Activated CD8-positive, alpha-beta T cell treated with anti-CD3 and anti-CD28 coated beads for 36 hours (primary cell): ENCODE measurements at regions of chr5 and their contacts with region 1.

Region 1: DNA sequence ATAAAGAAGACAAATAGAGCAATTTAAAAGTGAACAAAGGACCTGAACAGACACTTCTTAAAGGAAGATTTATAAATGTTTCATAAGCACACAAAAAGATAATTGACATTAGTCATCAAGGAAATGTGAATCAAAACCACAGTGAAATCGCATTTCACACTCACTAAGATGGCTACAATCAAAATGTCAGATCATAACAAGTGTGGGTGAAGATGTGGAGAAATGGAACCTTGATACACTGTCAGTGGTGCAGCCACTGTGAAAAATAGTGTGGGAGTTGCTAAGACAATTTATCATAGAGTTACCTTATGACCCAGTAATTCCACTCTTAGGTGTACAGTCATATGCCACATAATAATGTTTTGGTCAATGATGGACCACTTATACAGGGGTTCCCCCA is 54.5 kb upstream of the HTR4 start:
- DNase-seq: peak; percentile 69
- ATAC-seq: peak; percentile 97
- H3K4me3 Mint-ChIP-seq: no peak overlapping the region
- H3K27ac Mint-ChIP-seq: peak overlapping the region; percentile 55
- H3K4me1 Mint-ChIP-seq: peaks cover 35% of the 10 kb centered on the region
- H3K27me3 Mint-ChIP-seq: peaks cover 26% of the 10 kb centered on the region
- CTCF ChIP-seq: no peak

Region 2: GRCh38 chr5:148620696-148621095 is 88.2 kb before region 1 on chr5:
- CTCF ChIA-PET with region 1: no interaction called
- POLR2A ChIA-PET with region 1: interaction called, 3 read pairs
- intact Hi-C with region 1: loop called (anchors 5 kb)
- DNase-seq: peak; percentile 54
- ATAC-seq: peak; percentile 92
- H3K4me3 Mint-ChIP-seq: no peak overlapping the region
- H3K27ac Mint-ChIP-seq: no peak overlapping the region
- H3K4me1 Mint-ChIP-seq: peaks cover 19% of the 10 kb centered on the region
- H3K27me3 Mint-ChIP-seq: peaks cover 12% of the 10 kb centered on the region
- CTCF ChIP-seq: no peak